ENCODE measurements at regions of chr16 and their contacts with region 1.

Region 1: GRCh38 chr16:18983565-18984424 is at the start of gene TMC7:
- DNase-seq: peak; percentile 89
- H3K4me3 ChIP-seq: peak within 1 kb of the TSS; percentile 34 to 83 (median 64)
- H3K27ac ChIP-seq: peak within 1 kb of the TSS; percentile 2
- H3K4me1 ChIP-seq: peaks cover 7% of the 10 kb centered on the region
- H3K27me3 ChIP-seq: peaks cover 0 to 2% of the 10 kb centered on the region in 2 experiments
- CTCF ChIP-seq: peak; percentile 95
- POLR2A ChIP-seq: no peak
- total RNA-seq, gene TMC7: 6.9 and 7.0 TPM in 2 replicates

Region 2: GRCh38 chr16:17149904-17150483 is 1833.8 kb before region 1 on chr16:
- CTCF ChIA-PET with region 1: no interaction called
- POLR2A ChIA-PET with region 1: no interaction called
- dilution Hi-C with region 1: no loop called
- intact Hi-C with region 1: no loop called
- DNase-seq: no peak
- H3K4me3 ChIP-seq: no peak overlapping the region
- H3K27ac ChIP-seq: no peak overlapping the region
- H3K4me1 ChIP-seq: no peaks in the 10 kb centered on the region
- H3K27me3 ChIP-seq: no peaks in the 10 kb centered on the region
- CTCF ChIP-seq: no peak
- POLR2A ChIP-seq: no peak

Region 3: GRCh38 chr16:18853694-18854093 is 130.1 kb before region 1 on chr16:
- CTCF ChIA-PET with region 1: no interaction called
- POLR2A ChIA-PET with region 1: no interaction called
- dilution Hi-C with region 1: no loop called
- intact Hi-C with region 1: no loop called
- DNase-seq: no peak
- H3K4me3 ChIP-seq: no peak overlapping the region
- H3K27ac ChIP-seq: no peak overlapping the region
- H3K4me1 ChIP-seq: no peaks in the 10 kb centered on the region
- H3K27me3 ChIP-seq: no peaks in the 10 kb centered on the region
- CTCF ChIP-seq: no peak
- POLR2A ChIP-seq: no peak

Region 4: DNA sequence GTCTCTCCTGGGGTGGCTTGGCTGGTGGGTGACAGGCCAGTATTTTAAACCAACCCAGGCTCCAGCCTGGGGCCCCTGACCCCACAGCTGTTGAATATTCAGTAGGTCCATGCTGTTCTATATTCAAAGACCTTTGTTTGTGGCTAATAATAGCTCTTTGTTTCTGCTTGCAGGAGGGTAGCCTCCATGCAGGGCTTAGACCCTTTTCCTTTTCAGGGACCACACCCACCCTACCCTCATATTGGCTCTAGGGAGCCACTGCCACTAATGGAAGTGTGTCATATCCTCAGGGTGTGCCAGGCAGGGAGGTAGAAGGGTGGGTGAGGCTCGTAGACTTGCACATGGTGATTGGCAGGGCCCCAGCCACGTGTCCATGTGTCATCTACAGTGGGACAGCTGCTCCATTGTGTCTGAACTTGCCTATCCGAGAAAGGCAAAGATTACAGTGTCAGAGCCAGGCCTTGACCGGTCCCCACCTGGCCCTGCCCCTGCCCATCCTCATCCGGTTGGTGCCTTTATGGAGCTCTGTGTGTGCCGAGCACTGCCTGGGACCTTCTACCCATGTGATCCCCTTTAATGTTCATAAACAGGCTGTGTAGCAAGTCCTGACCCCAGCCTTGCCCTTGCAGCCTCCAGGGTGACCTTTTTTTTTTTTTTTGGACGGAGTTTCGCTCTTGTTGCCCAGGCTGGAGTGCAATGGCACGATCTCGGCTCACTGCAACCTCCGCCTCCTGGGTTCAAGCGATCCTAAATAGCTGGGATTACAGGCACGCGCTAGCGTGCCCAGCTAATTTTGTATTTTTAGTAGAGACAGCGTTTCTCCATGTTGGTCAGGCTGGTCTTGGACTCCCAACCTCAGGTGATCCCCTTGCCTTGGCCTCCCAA is 22.0 kb after region 1 on chr16:
- CTCF ChIA-PET with region 1: interaction called, 14 read pairs
- POLR2A ChIA-PET with region 1: no interaction called
- dilution Hi-C with region 1: no loop called
- intact Hi-C with region 1: no loop called
- DNase-seq: peak; percentile 54
- H3K4me3 ChIP-seq: no peak overlapping the region
- H3K27ac ChIP-seq: no peak overlapping the region
- H3K4me1 ChIP-seq: peaks cover 7% of the 10 kb centered on the region
- H3K27me3 ChIP-seq: no peaks in the 10 kb centered on the region
- CTCF ChIP-seq: no peak
- POLR2A ChIP-seq: no peak

Region 5: DNA sequence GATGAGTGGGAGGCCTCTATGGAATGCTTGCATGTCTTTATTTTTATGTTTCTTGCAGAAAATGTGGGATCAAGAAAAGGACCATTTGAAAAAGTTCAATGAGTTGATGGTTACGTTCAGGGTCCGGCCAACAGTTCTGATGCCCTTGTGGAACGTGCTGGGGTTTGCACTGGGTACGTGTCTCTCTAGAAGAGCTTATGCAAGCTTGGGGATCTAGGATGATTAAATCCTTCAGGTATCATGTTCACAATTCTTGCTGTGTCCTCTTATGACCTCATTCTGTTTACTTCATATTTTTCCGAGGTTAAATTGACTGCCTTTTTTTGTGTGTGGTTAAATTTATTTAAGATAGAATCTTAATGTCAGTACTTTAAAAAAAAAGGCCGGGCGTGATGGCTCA is 90.1 kb after region 1 on chr16:
- CTCF ChIA-PET with region 1: interaction called, 132 read pairs
- POLR2A ChIA-PET with region 1: no interaction called
- dilution Hi-C with region 1: no loop called
- intact Hi-C with region 1: loop called (anchors 1 kb)
- DNase-seq: no peak
- H3K4me3 ChIP-seq: no peak overlapping the region
- H3K27ac ChIP-seq: no peak overlapping the region
- H3K4me1 ChIP-seq: no peaks in the 10 kb centered on the region
- H3K27me3 ChIP-seq: no peaks in the 10 kb centered on the region
- CTCF ChIP-seq: no peak
- POLR2A ChIP-seq: no peak

Region 6: DNA sequence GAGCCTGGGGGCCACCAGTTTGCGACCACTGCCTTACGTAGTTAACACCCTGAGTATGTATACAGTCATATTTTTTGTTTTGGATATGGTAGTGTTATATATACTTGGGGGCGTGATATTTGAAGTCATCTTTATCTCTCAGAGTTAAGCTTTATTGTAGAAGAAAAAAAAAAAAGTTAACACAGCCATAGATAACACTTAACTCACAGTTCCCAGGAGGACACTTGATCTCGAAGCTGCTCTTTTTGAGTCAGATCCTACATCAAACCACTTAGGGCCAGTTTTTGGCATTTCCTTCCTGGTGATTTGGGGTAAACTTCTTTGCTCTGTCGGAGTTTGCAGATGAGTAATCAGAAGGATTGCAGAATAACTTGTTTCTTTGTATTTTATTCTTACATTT is 135.8 kb after region 1 on chr16:
- CTCF ChIA-PET with region 1: no interaction called
- POLR2A ChIA-PET with region 1: no interaction called
- dilution Hi-C with region 1: no loop called
- intact Hi-C with region 1: no loop called
- DNase-seq: peak; percentile 42
- H3K4me3 ChIP-seq: peak overlapping the region in 1 of 3 experiments; percentile 49
- H3K27ac ChIP-seq: peak overlapping the region; percentile 85
- H3K4me1 ChIP-seq: peaks cover 49% of the 10 kb centered on the region
- H3K27me3 ChIP-seq: no peaks in the 10 kb centered on the region
- CTCF ChIP-seq: no peak
- POLR2A ChIP-seq: peak; percentile 57

Region 7: GRCh38 chr16:19167710-19168370 is 184.0 kb after region 1 on chr16 and contains the start of gene SYT17:
- CTCF ChIA-PET with region 1: no interaction called
- POLR2A ChIA-PET with region 1: no interaction called
- dilution Hi-C with region 1: no loop called
- intact Hi-C with region 1: loop called (anchors 5 kb)
- DNase-seq: peak; percentile 65
- H3K4me3 ChIP-seq: peak within 1 kb of the TSS; percentile 7 to 45 (median 44)
- H3K27ac ChIP-seq: no peak within 1 kb of the TSS
- H3K4me1 ChIP-seq: peaks cover 3% of the 10 kb centered on the region
- H3K27me3 ChIP-seq: peaks cover 6 to 32% of the 10 kb centered on the region in 2 experiments
- CTCF ChIP-seq: peak; percentile 75 to 76
- POLR2A ChIP-seq: no peak
- total RNA-seq, gene SYT17: 1.8 and 1.9 TPM in 2 replicates

Region 8: GRCh38 chr16:19375561-19376158 is 391.9 kb after region 1 on chr16:
- CTCF ChIA-PET with region 1: interaction called, 3 read pairs
- POLR2A ChIA-PET with region 1: no interaction called
- dilution Hi-C with region 1: no loop called
- intact Hi-C with region 1: loop called (anchors 1 kb)
- DNase-seq: peak; percentile 71
- H3K4me3 ChIP-seq: no peak overlapping the region
- H3K27ac ChIP-seq: no peak overlapping the region
- H3K4me1 ChIP-seq: no peaks in the 10 kb centered on the region
- H3K27me3 ChIP-seq: peaks cover 0 to 3% of the 10 kb centered on the region in 2 experiments
- CTCF ChIP-seq: peak; percentile 59 to 67
- POLR2A ChIP-seq: no peak